HEK293 (cell line): ENCODE measurements at regions of chr10 and their contacts with region 1.

Region 1: DNA sequence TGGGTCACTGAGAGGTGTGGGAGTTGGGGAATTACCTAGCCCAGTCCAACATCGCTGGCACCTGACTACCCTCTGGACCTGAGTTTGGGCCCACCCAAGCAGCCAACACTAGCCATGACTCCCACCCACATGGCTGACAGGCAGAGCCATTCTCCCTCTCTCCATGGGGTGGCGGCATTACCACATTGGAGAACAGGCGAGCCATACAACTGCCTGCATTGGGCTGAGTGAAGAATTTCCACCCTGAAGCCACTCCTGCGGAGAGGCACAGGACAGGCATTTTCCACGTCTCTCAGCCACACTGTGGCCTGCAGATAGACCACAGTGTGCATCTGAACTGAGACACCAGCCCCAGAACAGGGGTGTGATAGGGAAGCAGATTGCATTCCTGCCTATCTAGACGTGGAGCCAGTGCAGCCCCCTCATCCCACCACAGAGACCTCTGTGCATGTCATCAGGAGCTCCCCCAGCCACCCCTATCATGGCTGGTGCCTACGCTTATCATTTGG is 58.2 kb upstream of the ANTXRL start:
- H3K4me3 ChIP-seq: no peak overlapping the region
- H3K27ac ChIP-seq: no peak overlapping the region
- H3K4me1 ChIP-seq: no peaks in the 10 kb centered on the region
- CTCF ChIP-seq: peak; percentile 92

Region 2: DNA sequence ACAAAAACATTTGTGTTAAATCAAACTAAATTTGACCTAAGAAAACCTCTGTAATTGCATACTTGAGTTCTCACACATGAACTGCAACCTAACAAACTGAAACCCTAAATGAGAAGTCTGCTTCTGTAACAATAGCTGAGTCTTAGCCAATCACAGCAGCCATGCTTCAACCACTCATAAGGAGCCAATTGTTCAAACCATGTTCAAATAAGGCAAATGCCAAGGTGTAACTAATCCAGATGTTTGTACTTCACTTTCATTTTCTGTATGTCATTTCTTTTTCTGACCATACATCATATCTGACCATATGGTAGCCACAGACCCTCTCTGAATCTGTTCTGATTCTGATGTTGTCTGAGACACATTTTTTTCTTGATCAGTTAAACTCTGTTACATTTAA is 10.6 kb after region 1 on chr10:
- CTCF ChIA-PET with region 1: interaction called, 16 read pairs
- POLR2A ChIA-PET with region 1: no interaction called
- H3K4me3 ChIP-seq: no peak overlapping the region
- H3K27ac ChIP-seq: no peak overlapping the region
- H3K4me1 ChIP-seq: no peaks in the 10 kb centered on the region
- CTCF ChIP-seq: no peak

Region 3: DNA sequence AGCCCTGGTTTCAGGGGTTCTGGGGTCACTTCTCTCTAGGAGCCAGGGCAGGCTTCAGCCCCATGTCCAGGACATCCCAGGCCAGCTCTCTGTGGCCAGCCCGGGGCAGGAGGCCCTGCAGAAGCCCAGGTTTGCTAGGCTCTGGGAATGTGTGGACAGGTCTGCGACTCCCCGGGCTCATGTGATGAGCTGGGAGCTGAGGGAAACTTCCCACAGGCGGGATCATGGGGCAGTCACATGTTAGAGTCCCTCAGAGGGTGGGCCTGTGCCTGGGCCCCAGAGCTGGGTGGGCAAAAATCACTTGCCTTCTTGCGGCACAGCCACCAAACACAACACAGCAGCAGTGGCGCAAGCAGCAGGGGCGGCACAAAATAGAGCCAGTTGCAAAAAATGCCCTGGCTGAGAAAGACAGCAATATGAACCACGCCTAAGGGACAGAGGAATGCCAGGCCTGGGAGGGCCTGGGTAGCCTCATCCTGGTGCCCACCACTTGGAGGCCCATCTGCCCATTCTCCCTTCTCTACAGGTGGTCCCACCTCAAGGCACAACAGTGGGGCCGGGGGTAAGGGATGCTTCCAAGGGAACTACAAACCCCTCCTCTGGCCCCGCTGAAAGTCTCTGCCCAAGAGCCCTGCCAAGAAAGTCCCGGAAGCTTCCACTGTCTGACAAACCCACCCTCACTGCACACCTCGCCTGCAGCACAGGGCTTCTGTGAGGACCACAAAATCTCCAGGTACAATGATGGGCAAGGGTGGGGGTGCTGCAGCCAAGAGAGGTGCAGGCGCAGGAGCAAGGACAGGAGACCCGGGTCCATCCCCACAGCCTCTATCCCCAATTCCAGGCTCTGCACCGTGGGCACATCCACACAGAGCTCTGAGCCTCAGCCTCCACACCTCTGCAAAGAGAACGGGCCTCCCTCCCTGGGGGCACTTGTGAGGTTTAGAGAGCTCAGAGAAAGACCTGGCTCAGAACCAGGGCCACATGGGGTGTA is 23.5 kb after region 1 on chr10:
- CTCF ChIA-PET with region 1: interaction called, 14 read pairs
- POLR2A ChIA-PET with region 1: no interaction called
- H3K4me3 ChIP-seq: no peak overlapping the region
- H3K27ac ChIP-seq: no peak overlapping the region
- H3K4me1 ChIP-seq: no peaks in the 10 kb centered on the region
- CTCF ChIP-seq: no peak